Natural killer cell (primary cell): ENCODE measurements at regions of chr10 and their contacts with region 1.

Region 1: DNA sequence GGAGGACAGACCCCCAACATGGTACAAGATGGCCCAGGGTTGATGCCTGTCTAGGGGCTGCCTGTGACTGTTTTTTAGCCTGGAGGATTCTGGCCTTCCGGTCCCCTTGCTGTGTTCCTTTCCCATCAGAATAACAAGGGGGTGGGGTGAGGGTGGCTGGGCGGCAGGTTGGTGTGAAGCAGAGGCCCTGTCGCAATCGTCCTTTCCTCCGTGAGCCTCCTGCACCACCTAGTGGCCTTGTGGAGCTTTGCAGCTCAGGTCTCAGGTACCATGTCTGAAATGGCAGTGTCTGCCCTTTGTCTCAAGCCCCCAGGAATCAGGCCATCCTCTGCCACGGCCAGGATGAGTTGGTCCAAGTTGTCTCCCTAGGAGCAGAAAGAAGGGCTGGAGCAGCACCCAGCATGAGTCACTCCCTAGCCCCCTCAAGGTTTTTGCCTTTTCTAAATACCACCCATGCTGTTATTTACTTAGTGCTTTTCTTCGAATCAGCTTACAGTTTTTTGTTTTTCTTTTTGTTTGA is 24.2 kb downstream of the TACR2 start:
- DNase-seq: peak; percentile 76 to 93
- ATAC-seq: peak; percentile 95 to 100 (median 100)
- H3K4me3 ChIP-seq: no peak overlapping the region
- H3K4me3 Mint-ChIP-seq: no peak overlapping the region
- H3K27ac ChIP-seq: peak overlapping the region; percentile 33
- H3K27ac Mint-ChIP-seq: peak overlapping the region in 1 of 2 donors; percentile 35
- H3K4me1 ChIP-seq: peaks cover 10% of the 10 kb centered on the region
- H3K4me1 Mint-ChIP-seq: peaks cover 10 to 12% of the 10 kb centered on the region in 2 donors
- H3K27me3 ChIP-seq: no peaks in the 10 kb centered on the region
- H3K27me3 Mint-ChIP-seq: no peaks in the 10 kb centered on the region
- CTCF ChIP-seq: peak; percentile 90

Region 2: DNA sequence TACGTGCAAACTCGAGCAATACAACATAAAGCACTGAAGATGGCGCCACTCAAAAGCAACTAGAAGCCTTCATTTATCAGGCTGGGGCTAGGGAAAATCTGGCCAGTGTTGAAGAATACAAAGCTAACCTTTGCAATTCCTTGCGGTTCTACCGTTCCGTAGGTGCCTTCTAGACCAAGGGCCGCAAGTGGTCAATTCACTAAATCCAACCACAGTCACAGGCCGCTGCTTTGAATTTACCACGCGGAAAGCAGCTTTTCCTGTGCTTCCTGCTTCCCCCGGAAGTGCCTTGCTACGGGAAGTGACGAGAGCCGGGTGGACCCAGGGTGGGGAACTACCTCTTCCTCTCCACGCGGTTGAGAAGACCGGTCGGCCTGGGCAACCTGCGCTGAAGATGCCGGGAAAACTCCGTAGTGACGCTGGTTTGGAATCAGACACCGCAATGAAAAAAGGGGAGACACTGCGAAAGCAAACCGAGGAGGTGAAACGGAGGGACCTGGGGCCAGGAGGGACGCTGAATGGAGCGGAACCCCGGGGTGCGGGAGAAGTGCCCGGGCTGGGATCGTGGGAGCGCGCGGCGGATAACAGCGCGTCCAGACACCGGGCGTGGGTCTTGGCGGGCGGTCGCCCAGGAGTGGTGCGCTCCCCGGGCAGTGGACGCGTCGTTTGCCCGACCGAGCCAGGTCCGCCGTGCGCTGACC is 436.6 kb before region 1 on chr10 and contains the start of gene DDX21:
- intact Hi-C with region 1: loop called (anchors 1 kb)
- DNase-seq: peak; percentile 81 to 94
- ATAC-seq: peak; percentile 84 to 93 (median 87)
- H3K4me3 ChIP-seq: peak within 1 kb of the TSS; percentile 72
- H3K4me3 Mint-ChIP-seq: peak within 1 kb of the TSS; percentile 99
- H3K27ac ChIP-seq: peak within 1 kb of the TSS; percentile 86
- H3K27ac Mint-ChIP-seq: peak within 1 kb of the TSS; percentile 99
- H3K4me1 ChIP-seq: peaks cover 25% of the 10 kb centered on the region
- H3K4me1 Mint-ChIP-seq: peaks cover 31 to 38% of the 10 kb centered on the region in 2 donors
- H3K27me3 ChIP-seq: no peaks in the 10 kb centered on the region
- H3K27me3 Mint-ChIP-seq: no peaks in the 10 kb centered on the region
- CTCF ChIP-seq: peak; percentile 77
- total RNA-seq, gene DDX21: 59.0 to 62.1 (median 59.8) TPM

Region 3: DNA sequence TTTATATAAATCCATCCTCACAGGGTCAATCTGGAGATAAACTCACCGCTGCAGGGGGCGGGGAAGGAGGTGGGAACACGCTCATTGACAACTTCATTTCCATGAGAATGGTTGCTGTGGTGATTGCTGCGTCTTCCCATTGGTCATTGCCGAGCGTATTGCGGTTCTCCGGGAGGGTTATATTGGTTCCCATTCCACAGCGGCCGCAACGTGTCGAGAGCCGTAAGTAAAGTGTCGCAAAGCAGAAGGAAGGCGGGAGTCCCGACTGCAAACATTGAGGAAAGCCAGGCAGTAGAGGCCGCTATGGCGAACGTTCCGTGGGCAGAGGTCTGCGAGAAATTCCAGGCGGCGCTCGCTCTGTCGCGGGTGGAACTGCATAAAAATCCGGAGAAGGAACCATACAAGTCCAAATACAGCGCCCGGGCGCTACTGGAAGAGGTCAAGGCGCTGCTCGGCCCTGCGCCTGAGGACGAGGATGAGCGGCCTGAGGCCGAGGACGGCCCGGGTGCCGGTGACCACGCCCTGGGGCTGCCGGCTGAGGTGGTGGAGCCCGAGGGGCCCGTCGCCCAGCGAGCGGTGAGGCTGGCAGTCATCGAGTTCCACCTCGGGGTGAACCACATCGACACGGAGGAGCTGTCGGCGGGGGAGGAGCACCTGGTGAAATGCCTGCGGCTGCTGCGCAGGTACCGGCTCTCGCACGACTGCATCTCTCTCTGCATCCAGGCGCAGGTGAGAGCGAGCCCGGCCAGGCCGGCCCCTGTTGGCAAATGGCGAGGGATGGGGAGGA is 403.8 kb before region 1 on chr10 and contains the start of gene KIFBP:
- intact Hi-C with region 1: loop called (anchors 5 kb)
- DNase-seq: peak; percentile 63 to 94
- ATAC-seq: peak; percentile 84 to 90 (median 84)
- H3K4me3 ChIP-seq: peak within 1 kb of the TSS; percentile 69
- H3K4me3 Mint-ChIP-seq: peak within 1 kb of the TSS; percentile 99
- H3K27ac ChIP-seq: peak within 1 kb of the TSS; percentile 56
- H3K27ac Mint-ChIP-seq: peak within 1 kb of the TSS; percentile 84 to 96
- H3K4me1 ChIP-seq: peaks cover 20% of the 10 kb centered on the region
- H3K4me1 Mint-ChIP-seq: peaks cover 43 to 45% of the 10 kb centered on the region in 2 donors
- H3K27me3 ChIP-seq: no peaks in the 10 kb centered on the region
- H3K27me3 Mint-ChIP-seq: no peaks in the 10 kb centered on the region
- CTCF ChIP-seq: peak; percentile 13
- total RNA-seq, gene KIFBP: 3.5 to 4.4 (median 4.0) TPM

Region 4: GRCh38 chr10:69004821-69005220 is 387.7 kb before region 1 on chr10:
- intact Hi-C with region 1: loop called (anchors 1 kb)
- DNase-seq: peak in 1 of 2 donors; percentile 74
- ATAC-seq: peak; percentile 67 to 90 (median 72)
- H3K4me3 ChIP-seq: no peak overlapping the region
- H3K4me3 Mint-ChIP-seq: no peak overlapping the region
- H3K27ac ChIP-seq: no peak overlapping the region
- H3K27ac Mint-ChIP-seq: peak overlapping the region; percentile 50 to 60
- H3K4me1 ChIP-seq: no peaks in the 10 kb centered on the region
- H3K4me1 Mint-ChIP-seq: peaks cover 5 to 8% of the 10 kb centered on the region in 2 donors
- H3K27me3 ChIP-seq: no peaks in the 10 kb centered on the region
- H3K27me3 Mint-ChIP-seq: no peaks in the 10 kb centered on the region
- CTCF ChIP-seq: peak; percentile 79

Region 5: GRCh38 chr10:69237528-69238159 is 154.9 kb before region 1 on chr10:
- intact Hi-C with region 1: loop called (anchors 1 kb)
- DNase-seq: peak; percentile 85 to 90
- ATAC-seq: peak; percentile 95 to 100 (median 100)
- H3K4me3 ChIP-seq: no peak overlapping the region
- H3K4me3 Mint-ChIP-seq: no peak overlapping the region
- H3K27ac ChIP-seq: no peak overlapping the region
- H3K27ac Mint-ChIP-seq: peak overlapping the region in 1 of 2 donors; percentile 14
- H3K4me1 ChIP-seq: peaks cover 17% of the 10 kb centered on the region
- H3K4me1 Mint-ChIP-seq: peaks cover 10 to 26% of the 10 kb centered on the region in 2 donors
- H3K27me3 ChIP-seq: no peaks in the 10 kb centered on the region
- H3K27me3 Mint-ChIP-seq: no peaks in the 10 kb centered on the region
- CTCF ChIP-seq: peak; percentile 98

Region 6: DNA sequence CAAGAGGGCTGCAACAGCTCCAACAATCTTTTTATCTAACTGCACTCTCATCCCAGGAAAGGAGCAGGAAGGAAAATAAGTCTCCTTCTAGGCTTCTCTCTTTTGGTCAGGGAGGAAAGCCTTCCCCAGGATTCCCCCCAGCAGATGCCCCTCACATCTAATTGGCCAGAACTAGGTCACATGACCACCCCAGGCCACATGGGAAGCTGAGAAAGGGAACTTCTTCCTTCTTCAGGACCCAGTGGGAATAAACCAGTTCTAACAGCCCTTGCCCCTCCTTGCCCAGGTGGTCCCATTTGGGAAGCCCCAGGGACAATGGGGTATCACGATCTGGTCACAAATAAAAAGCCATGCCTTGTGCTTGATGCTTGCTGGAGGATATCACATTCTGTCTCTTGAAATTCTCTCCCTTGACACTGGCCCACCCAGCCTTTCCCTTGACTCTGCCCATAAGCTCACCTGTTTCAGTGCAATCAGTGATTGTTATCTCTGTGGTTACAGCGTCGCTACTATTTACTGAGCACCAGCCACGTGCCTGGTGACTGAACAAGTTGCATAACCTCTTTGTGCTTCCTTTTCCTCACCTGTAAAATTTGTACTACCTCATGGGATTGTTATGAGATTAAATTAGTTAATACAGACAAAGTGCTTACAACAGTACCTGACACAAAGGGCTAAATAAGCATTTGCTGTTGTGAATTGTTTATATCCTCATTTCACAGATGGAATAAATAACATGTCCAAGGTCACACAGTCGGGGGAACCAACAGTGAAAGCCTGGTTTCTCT is 33.2 kb after region 1 on chr10:
- intact Hi-C with region 1: no loop called
- DNase-seq: peak in 1 of 2 donors; percentile 82
- ATAC-seq: peak in 1 of 3 donors; percentile 35
- H3K4me3 ChIP-seq: no peak overlapping the region
- H3K4me3 Mint-ChIP-seq: no peak overlapping the region
- H3K27ac ChIP-seq: peak overlapping the region; percentile 5
- H3K27ac Mint-ChIP-seq: no peak overlapping the region
- H3K4me1 ChIP-seq: peaks cover 15% of the 10 kb centered on the region
- H3K4me1 Mint-ChIP-seq: peaks cover 0 to 16% of the 10 kb centered on the region in 2 donors
- H3K27me3 ChIP-seq: no peaks in the 10 kb centered on the region
- H3K27me3 Mint-ChIP-seq: peaks cover 0 to 9% of the 10 kb centered on the region in 2 donors
- CTCF ChIP-seq: no peak